ENCODE measurements at regions of chr14 and their contacts with region 1.

Region 1: DNA sequence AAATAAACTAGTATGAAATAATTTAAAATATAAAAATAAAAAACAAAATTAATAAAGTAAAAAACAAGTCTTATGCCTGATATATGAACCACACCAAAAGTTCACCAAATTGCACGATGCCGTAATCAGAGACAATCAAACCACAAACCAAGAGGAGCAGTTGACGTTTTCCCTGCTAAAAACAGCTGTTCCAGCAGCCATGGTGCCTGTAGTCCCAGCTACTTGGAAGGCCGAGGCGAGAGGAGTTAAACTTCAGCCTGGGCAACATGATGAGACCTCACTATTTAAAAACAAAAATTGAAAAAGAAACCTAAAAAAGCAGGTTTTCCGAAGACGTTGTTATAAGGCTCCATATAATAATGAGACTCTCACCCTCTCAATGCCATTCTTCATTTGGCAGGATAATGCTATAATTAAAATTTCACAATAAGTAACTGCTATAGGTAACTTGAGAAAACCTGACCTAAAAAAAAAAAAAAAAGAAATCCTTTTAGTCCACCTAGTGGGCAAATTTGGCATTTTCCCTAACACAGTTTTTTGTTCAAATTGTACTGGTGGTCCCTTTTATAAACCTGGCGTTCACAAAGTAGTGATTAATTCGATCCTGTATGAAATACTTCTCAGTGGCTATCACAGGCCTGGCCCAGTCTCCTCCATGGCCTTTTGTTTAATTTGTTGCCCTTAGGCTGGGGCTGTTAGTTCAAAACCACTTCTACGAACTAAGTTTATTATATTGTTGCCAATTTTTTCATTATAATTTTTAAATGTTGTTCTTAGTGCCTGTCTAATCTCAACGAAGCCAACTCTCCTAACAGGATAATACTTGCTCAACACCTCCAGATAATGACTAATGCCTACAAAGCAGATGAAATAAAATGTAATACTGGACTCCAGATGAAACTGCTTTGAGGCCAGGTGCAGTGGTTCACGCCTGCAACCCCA is 62.1 kb downstream of the TNFAIP2 start:
- DNase-seq: no peak
- ATAC-seq: no peak
- H3K4me3 ChIP-seq: no peak overlapping the region
- H3K27ac ChIP-seq: no peak overlapping the region
- H3K4me1 ChIP-seq: no peaks in the 10 kb centered on the region
- H3K27me3 ChIP-seq: no peaks in the 10 kb centered on the region

Region 2: DNA sequence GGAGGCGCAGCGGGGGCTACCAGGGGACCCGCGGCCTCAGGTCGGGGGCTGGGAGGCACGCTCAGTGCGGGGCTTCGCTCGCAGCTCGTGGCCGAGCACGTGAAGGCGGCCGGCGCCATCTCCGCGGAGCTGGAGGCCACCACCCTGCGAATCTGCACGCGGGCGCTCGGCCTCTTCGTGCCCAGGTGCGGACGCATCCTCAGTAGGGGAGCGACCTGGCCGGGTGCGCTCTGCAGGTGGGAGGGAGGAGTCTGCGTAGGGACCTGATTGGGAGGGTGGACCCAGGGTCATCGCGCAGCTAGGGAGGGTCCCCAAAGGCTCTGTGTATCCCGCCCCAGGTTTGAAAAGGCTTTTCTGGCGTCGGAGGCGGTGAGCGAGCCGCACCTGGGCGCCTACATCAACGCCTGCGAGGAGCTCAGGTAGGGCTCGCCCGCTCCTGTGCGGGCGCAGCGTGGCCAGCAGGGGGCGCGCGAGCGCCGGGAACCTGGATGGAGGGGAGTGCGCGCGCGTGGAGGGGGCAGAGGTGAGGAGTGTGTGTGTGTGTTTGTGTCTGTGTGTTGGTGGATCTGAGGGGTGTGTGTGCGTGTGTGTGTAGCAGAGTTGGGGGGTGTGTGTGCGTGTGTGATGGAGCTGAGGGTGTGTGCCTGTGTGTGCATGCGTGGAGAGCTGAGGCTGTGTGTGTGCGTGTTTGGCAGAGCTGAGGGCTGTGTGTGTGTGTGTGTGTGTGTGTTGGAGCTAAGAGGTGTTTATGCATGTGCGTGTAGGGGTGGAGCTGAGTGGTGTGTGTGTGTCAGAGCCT is 80.5 kb before region 1 on chr14:
- intact Hi-C with region 1: loop called in 3 of 4 experiments (anchors 2 to 10 kb)
- DNase-seq: peak; percentile 66 to 89 (median 88)
- ATAC-seq: peak; percentile 74 to 81
- H3K4me3 ChIP-seq: no peak overlapping the region
- H3K27ac ChIP-seq: no peak overlapping the region
- H3K4me1 ChIP-seq: no peaks in the 10 kb centered on the region
- H3K27me3 ChIP-seq: no peaks in the 10 kb centered on the region

Region 3: DNA sequence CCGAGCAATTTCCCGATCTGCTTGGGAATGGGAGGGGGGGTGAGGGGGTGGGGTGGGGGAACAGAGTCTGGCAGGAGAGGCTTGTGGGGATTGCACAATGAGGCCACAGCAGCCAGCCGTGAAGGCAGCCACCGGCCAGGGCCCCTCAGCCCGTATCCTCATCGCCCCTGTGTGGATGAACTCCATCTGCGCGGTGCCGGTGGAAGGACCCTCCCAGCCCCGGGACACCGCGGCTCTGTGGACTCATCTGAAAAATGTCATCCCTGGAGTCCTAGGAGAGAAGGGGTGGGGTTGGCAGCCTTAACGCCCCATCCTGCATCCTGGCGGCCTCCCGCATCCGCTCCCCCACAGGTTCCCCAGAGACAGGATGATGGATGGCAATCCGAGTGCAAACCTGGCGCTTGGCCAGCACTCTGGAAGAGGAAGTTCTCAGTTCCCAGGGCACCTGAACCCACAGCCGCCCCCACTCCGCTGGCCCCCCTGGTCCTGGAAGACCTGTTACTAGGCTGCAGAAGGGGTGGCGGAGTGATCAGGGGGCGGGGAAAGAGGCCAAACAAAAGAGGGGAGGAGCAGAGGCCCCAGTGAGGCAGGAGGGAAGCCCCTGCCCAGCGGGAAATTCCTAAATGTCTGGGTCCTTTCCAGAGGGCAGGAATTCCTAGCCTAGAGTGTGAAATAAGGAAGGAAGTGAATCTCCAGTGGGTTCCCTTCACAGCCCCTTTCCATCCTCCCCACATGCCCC is 63.3 kb before region 1 on chr14:
- intact Hi-C with region 1: loop called in 1 of 4 experiments (anchors 10 kb)
- DNase-seq: peak; percentile 91 to 97 (median 95)
- ATAC-seq: peak; percentile 61 to 64
- H3K4me3 ChIP-seq: peak overlapping the region; percentile 59
- H3K27ac ChIP-seq: peak overlapping the region; percentile 92
- H3K4me1 ChIP-seq: peaks cover 11% of the 10 kb centered on the region
- H3K27me3 ChIP-seq: no peaks in the 10 kb centered on the region

Measured in right cardiac atrium (tissue), 5 donors.